Cardiac septum (tissue), 1 donor: ENCODE measurements at regions of chr22 and their contacts with region 1.

Region 1: DNA sequence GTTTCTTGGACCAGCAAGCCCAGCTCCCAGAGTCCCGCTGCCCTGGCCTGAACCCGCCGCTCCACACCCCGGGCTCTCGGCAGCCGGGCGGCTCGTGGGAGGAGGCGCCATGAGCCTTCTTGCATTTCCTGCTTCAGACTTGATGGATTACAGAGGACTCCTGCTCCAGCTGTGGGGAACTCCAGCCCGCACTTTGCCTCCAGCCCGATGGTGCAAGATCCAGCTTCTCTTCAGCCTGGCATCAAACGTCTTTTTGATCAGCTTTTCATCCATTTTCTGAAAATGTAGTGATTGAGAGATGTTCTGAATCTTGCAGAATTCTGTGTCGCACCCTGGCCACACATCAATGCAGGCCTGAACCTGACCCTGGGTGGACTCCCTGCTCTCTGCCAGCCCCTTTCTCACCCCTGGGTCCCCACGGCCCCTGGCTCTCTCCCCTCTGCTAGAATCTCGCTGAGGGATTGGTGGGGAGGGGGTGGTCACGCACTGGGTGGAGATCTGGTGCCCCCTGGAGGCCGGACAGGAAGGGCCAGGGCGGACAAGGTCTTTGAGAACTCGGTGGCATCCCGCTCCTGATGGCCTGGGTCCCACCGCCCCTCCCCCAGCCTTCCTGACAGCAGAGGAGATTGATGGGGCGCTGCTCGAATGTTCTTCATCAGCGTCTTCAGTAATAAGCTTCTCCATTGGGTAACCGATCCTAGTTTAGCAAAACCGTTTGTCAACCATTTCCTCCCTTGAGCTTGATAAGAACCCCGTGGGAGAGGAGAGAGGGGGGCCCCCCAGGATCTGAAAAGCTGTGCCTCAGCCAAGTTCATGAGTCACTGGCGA is 12.1 kb upstream of the NFAM1 start:
- DNase-seq: peak; percentile 87

Region 2: GRCh38 chr22:42070517-42071422 is 373.5 kb before region 1 on chr22 and contains the start of gene NAGA:
- intact Hi-C with region 1: loop called (anchors 5 kb)
- DNase-seq: peak; percentile 97
- total RNA-seq, gene NAGA: 11.2 TPM

Region 3: DNA sequence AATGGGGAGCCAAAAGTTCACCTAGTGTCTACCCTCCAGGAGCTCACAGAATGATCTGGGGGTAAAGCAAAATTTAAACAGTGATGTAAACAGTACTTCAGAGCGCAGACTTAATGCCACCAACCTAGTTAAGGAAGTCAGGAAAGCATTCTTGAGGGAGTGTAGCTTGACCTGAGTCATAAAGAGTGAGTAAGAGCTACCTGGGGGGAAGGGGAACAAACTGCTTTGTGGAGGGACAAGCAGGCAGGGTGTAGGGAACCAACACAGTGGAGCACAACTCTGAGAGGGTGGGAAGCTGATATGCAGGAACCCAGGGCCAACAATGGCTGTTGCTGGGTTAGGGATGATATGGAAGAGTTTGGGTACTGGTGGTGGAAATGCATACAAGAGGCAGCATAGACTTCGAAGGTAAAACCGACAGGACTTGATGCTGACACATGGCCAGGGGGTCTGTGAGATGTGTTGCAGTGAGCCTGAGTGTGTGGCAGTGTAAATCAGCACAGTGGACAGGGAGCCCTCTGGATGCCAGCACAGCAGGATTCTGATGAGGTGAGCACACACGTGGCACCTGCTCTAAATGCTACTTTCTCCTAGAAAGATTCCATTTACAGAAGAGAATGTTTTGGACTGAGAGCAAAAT is 255.4 kb before region 1 on chr22:
- intact Hi-C with region 1: no loop called
- DNase-seq: no peak